ENCODE measurements at regions of chr3 and their contacts with region 1.

Region 1: GRCh38 chr3:136752422-136753325 is 496 bp upstream of the STAG1 start:
- DNase-seq: peak; percentile 100
- ATAC-seq: peak; percentile 96

Region 2: DNA sequence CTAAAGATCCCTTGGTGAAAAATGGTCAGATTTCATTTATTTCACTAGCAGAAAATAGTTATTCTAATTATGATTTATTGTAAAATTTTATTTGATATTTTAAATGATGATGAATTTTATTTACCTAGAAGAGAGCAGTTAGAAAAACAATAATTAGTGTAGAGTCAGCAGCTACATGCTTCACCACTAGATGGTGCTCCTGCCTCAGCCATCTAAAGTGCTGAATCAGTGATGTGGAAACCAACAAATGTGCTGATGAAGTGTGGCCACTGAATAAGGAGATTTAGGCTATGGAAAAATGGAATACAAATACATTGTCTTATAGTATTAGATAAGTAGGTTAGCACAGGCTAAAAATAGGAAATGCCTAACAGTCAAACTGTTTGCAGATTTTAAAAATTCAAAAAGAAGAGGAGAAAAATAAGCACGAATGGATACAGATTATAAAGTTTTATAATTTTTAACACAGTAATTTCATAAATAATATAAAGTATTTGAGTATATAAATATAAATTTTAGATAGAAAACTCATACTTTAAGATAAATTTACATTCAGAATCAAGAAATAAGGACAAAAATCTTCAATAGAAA is 677.4 kb before region 1 on chr3:
- intact Hi-C with region 1: loop called (anchors 10 kb)
- DNase-seq: peak; percentile 66
- ATAC-seq: peak; percentile 90

Region 3: GRCh38 chr3:136196401-136197158 is 556.1 kb before region 1 on chr3:
- intact Hi-C with region 1: loop called (anchors 10 kb)
- DNase-seq: peak; percentile 99
- ATAC-seq: peak; percentile 89

Region 4: DNA sequence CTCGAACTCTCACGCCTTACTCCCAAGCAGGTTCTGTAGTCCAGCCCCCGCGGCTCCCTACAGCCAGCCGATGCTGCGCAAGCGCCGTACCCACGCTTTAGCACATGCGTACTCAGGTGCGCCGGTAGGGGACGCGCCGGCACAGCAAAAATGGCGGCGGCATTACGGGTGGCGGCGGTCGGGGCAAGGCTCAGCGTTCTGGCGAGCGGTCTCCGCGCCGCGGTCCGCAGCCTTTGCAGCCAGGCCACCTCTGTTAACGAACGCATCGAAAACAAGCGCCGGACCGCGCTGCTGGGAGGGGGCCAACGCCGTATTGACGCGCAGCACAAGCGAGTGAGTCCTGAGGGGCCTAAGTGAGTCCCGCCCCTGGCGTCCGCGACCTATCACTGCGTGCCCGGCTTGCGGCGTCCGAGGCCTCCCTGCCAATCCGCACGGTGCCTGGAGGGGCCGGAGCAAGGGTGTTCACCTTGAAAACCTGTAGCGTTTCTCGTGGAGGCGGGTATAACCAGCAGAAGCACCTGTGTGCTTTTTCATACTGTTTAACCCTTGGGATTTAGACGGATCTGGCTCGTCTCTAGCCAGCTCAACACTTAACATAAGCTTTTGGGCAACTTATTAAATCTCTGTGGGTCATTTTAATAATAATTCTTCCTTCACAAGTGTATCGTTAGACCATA is 502.3 kb before region 1 on chr3 and contains the start of gene PCCB:
- intact Hi-C with region 1: loop called (anchors 5 kb)
- DNase-seq: peak; percentile 97
- ATAC-seq: peak; percentile 99
- total RNA-seq, gene PCCB: 104 TPM

Region 5: GRCh38 chr3:136559896-136560295 is 192.8 kb before region 1 on chr3:
- intact Hi-C with region 1: no loop called
- DNase-seq: no peak
- ATAC-seq: no peak

Region 6: DNA sequence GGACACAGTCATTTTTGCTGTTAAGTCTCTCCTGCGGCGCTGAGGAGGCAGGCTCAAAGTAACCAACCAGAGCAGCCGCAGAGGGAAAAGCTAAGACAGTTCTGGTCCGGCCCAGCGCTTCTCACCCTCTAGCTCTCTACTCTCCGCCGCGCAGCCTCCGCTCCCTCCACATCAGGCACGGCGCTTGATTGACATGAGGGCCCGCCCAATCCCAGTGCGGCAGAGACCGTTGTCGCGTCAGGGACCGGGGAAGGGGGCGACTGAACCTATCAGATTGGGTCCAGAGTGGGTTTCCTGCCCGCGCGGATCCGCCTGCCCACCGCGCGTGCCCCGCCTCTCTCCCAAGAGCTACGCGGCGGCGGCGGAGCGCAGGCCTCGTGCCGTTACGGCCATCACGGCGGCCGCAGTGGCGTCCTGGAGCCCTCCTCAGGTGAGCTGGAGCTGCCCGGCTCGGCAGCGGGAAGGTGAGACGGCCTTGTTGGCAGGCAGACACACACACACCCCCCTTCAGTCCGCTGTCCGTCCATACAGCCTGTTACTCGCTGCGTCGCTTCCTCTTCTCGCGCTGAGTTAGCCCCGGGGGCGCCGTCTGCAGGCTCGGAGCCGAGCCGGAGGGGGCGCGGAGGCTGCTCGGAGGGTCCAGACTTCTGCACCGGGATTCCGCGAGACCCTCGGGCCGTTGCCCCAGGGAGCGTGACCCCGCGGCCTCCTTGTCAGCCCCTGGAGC is 109.4 kb after region 1 on chr3 and contains the start of gene NCK1:
- intact Hi-C with region 1: loop called (anchors 5 kb)
- DNase-seq: peak; percentile 99
- ATAC-seq: peak; percentile 98
- total RNA-seq, gene NCK1: 21.7 TPM

Region 7: GRCh38 chr3:137013955-137014688 is 261.4 kb after region 1 on chr3:
- intact Hi-C with region 1: loop called (anchors 5 kb)
- DNase-seq: peak; percentile 92
- ATAC-seq: peak; percentile 99

Measured in Right ventricle myocardium superior (tissue), 1 donor.